ENCODE measurements at regions of chr13 and their contacts with region 1.

Region 1: GRCh38 chr13:100506154-100506553 is 82.4 kb downstream of the GGACT start:
- DNase-seq: no peak
- H3K4me3 ChIP-seq: no peak overlapping the region
- H3K27ac ChIP-seq: no peak overlapping the region
- H3K4me1 ChIP-seq: no peaks in the 10 kb centered on the region
- H3K27me3 ChIP-seq: no peaks in the 10 kb centered on the region
- CTCF ChIP-seq: no peak
- EP300 ChIP-seq: no peak
- POLR2A ChIP-seq: no peak

Region 2: GRCh38 chr13:100440751-100441425 is 65.3 kb before region 1 on chr13:
- in situ Hi-C with region 1: no loop called
- intact Hi-C with region 1: no loop called
- DNase-seq: no peak
- H3K4me3 ChIP-seq: no peak overlapping the region
- H3K27ac ChIP-seq: no peak overlapping the region
- H3K4me1 ChIP-seq: peaks cover 0 to 23% (median 0%) of the 10 kb centered on the region in 4 donors
- H3K27me3 ChIP-seq: no peaks in the 10 kb centered on the region
- CTCF ChIP-seq: no peak
- EP300 ChIP-seq: no peak
- POLR2A ChIP-seq: no peak

Region 3: GRCh38 chr13:100584896-100585295 is 78.7 kb after region 1 on chr13:
- in situ Hi-C with region 1: no loop called
- intact Hi-C with region 1: loop called (anchors 2 kb)
- DNase-seq: no peak
- H3K4me3 ChIP-seq: no peak overlapping the region
- H3K27ac ChIP-seq: no peak overlapping the region
- H3K4me1 ChIP-seq: peaks cover 0 to 7% (median 6%) of the 10 kb centered on the region in 4 donors
- H3K27me3 ChIP-seq: no peaks in the 10 kb centered on the region
- CTCF ChIP-seq: no peak
- EP300 ChIP-seq: no peak
- POLR2A ChIP-seq: no peak

Measured in transverse colon (tissue), 4 donors.